ENCODE measurements at regions of chrX and their contacts with region 1.

Region 1: GRCh38 chrX:53284684-53285447 is 3.5 kb upstream of the IQSEC2 start:
- DNase-seq: peak in 8 of 9 donors; percentile 14 to 53 (median 40)
- ATAC-seq: peak; percentile 78
- H3K4me3 ChIP-seq: no peak overlapping the region
- H3K4me3 Mint-ChIP-seq: no peak overlapping the region
- H3K27ac ChIP-seq: no peak overlapping the region
- H3K27ac Mint-ChIP-seq: peak overlapping the region in 1 of 9 donors; percentile 21
- H3K4me1 ChIP-seq: peaks cover 6 to 19% of the 10 kb centered on the region in 2 donors
- H3K4me1 Mint-ChIP-seq: peaks cover 14 to 47% (median 31%) of the 10 kb centered on the region in 7 donors
- H3K27me3 ChIP-seq: no peaks in the 10 kb centered on the region
- H3K27me3 Mint-ChIP-seq: no peaks in the 10 kb centered on the region

Region 2: DNA sequence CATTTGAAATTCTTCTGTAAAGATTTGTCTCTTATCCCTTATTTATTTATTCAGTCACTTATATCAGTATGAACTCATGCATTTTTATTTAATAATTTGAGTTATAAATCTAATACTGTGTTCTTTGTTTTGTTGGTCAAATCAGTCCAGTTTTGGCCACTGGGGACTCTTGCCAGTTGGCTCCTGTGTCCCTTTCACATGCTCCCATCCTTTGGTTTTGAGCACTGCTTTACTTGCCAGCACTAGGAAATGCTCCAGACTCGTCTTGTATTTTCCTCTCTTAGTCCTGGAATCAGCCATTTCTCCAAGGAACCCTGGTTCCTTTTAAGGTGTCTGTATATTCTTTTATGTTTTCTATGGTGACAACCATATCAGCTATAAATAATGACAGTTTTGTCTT is 162.9 kb before region 1 on chrX:
- CTCF ChIA-PET with region 1: no interaction called
- POLR2A ChIA-PET with region 1: no interaction called
- intact Hi-C with region 1: no loop called
- DNase-seq: no peak
- ATAC-seq: no peak
- H3K4me3 ChIP-seq: no peak overlapping the region
- H3K4me3 Mint-ChIP-seq: no peak overlapping the region
- H3K27ac ChIP-seq: no peak overlapping the region
- H3K27ac Mint-ChIP-seq: no peak overlapping the region
- H3K4me1 ChIP-seq: no peaks in the 10 kb centered on the region
- H3K4me1 Mint-ChIP-seq: peaks cover 2 to 34% (median 21%) of the 10 kb centered on the region in 7 donors
- H3K27me3 ChIP-seq: no peaks in the 10 kb centered on the region
- H3K27me3 Mint-ChIP-seq: no peaks in the 10 kb centered on the region

Region 3: GRCh38 chrX:53433651-53434639 is 149.1 kb after region 1 on chrX and contains the start of gene HSD17B10:
- CTCF ChIA-PET with region 1: interaction called, 4 read pairs
- POLR2A ChIA-PET with region 1: interaction called, 3 read pairs
- intact Hi-C with region 1: loop called in 1 of 2 experiments (anchors 1 kb)
- DNase-seq: peak; percentile 70 to 84 (median 81)
- ATAC-seq: peak; percentile 99
- H3K4me3 ChIP-seq: peak within 1 kb of the TSS; percentile 76
- H3K4me3 Mint-ChIP-seq: peak within 1 kb of the TSS; percentile 83 to 99 (median 94)
- H3K27ac ChIP-seq: peak within 1 kb of the TSS; percentile 82
- H3K27ac Mint-ChIP-seq: peak within 1 kb of the TSS; percentile 85 to 99 (median 94)
- H3K4me1 ChIP-seq: peaks cover 0 to 11% of the 10 kb centered on the region in 2 donors
- H3K4me1 Mint-ChIP-seq: peaks cover 8 to 32% (median 15%) of the 10 kb centered on the region in 7 donors
- H3K27me3 ChIP-seq: no peaks in the 10 kb centered on the region
- H3K27me3 Mint-ChIP-seq: no peaks in the 10 kb centered on the region
- total RNA-seq, gene HSD17B10: 23.9 to 116 (median 38.6) TPM

Region 4: DNA sequence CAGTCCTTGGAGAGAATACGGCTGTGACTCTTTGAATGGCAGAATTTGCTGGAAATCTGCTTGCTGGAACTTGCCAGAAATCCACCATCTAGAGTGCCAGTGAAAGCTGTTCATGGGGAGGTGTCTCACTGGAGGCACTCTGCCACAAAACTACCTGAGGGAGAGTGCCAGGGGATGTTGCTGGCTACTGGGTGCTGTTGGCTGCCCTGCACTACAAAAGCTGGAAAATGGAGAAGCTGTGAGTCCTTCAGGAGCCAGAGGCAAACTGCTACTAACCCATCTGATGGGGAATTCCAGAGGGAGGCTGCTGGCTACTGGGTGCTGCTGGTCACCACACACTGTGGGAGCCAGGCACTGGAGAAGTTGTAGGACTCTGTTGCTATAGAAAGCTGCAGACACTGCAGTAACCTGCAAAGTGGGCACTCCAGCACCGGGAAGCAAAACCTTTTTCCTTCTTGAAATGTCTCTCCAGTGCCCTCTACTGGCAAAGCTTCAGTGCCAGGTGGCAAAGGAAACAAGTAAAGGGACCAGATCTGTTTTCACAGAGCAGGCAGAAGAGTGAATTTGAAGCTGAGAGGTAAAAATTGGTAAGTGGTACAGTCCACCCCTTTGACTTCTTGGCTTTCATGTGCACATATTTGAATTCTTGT is 197.1 kb after region 1 on chrX:
- CTCF ChIA-PET with region 1: interaction called, 4 read pairs
- POLR2A ChIA-PET with region 1: no interaction called
- intact Hi-C with region 1: loop called in 1 of 2 experiments (anchors 1 kb)
- DNase-seq: peak in 8 of 9 donors; percentile 14 to 57 (median 32)
- ATAC-seq: peak; percentile 61
- H3K4me3 ChIP-seq: no peak overlapping the region
- H3K4me3 Mint-ChIP-seq: no peak overlapping the region
- H3K27ac ChIP-seq: no peak overlapping the region
- H3K27ac Mint-ChIP-seq: no peak overlapping the region
- H3K4me1 ChIP-seq: no peaks in the 10 kb centered on the region
- H3K4me1 Mint-ChIP-seq: peaks cover 0 to 2% (median 0%) of the 10 kb centered on the region in 7 donors
- H3K27me3 ChIP-seq: no peaks in the 10 kb centered on the region
- H3K27me3 Mint-ChIP-seq: peaks cover 0 to 2% (median 0%) of the 10 kb centered on the region in 5 donors